Activated CD4-positive, alpha-beta T cell treated with anti-CD3 and anti-CD28 coated beads for 36 hours (primary cell): ENCODE measurements at regions of chr22 and their contacts with region 1.

Region 1: GRCh38 chr22:38755911-38756532 is at the start of gene SUN2:
- DNase-seq: peak; percentile 96
- ATAC-seq: peak; percentile 74
- H3K4me3 Mint-ChIP-seq: peak within 1 kb of the TSS; percentile 92
- H3K27ac Mint-ChIP-seq: peak within 1 kb of the TSS; percentile 94
- H3K4me1 Mint-ChIP-seq: peaks cover 58% of the 10 kb centered on the region
- H3K27me3 Mint-ChIP-seq: no peaks in the 10 kb centered on the region
- total RNA-seq, gene SUN2: 87.2 to 102 TPM

Region 2: DNA sequence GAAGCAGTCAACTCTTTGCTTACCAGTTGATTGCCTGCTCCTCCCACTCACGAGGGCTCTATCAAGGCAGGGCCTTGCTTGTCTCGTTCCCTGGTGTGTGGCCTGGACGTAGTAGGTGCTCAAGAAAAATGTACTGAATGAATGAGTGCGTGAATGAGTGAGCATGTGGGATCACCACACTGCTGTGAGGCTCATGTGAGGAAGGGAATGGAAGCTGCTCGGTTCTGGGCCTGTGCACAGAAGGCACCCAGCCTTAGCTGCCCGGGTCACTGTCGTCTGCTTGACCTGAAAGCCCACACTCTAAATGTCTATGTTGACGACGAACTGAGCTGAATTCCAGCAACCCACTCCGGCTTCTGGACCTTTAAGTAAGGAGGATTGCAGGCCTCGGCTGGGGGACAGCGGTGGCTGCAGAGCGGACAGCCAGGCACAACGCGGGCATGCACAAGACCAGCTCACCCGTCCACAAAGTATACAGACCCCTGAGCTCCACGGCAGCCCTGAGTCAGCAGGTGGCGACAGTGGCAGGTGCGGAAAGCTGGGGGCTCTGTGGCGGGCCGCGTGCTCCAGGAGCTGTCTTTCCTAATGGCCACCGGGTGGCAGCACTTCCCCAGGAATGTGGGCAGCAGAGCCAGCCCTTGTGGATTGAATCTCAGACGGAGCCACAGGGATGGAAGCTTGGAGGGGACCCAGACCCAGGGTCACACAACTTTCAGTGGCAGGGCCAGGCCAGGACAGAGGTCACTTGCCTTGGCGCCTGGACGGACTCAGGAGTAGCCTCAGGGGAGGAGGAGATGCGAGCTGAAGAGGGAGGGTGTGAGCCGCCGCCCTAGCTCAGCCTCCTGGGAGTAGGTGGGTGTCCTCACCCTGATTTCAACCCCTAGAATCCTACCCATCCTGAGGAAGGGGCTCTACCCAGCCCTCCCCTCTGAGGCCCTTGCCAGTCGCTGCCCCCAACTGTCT is 703.8 kb before region 1 on chr22:
- CTCF ChIA-PET with region 1: no interaction called
- POLR2A ChIA-PET with region 1: no interaction called
- intact Hi-C with region 1: loop called in 1 of 2 experiments (anchors 10 kb)
- DNase-seq: peak; percentile 87
- ATAC-seq: peak; percentile 83
- H3K4me3 Mint-ChIP-seq: no peak overlapping the region
- H3K27ac Mint-ChIP-seq: no peak overlapping the region
- H3K4me1 Mint-ChIP-seq: peaks cover 7% of the 10 kb centered on the region
- H3K27me3 Mint-ChIP-seq: peaks cover 7% of the 10 kb centered on the region

Region 3: GRCh38 chr22:38705235-38706100 is 50.6 kb before region 1 on chr22 and contains the start of gene GTPBP1:
- CTCF ChIA-PET with region 1: no interaction called
- POLR2A ChIA-PET with region 1: interaction called, 4 read pairs
- intact Hi-C with region 1: loop called (anchors 1 to 2 kb)
- DNase-seq: peak; percentile 98
- ATAC-seq: peak; percentile 89
- H3K4me3 Mint-ChIP-seq: peak within 1 kb of the TSS; percentile 93
- H3K27ac Mint-ChIP-seq: peak within 1 kb of the TSS; percentile 97
- H3K4me1 Mint-ChIP-seq: peaks cover 53% of the 10 kb centered on the region
- H3K27me3 Mint-ChIP-seq: no peaks in the 10 kb centered on the region
- total RNA-seq, gene GTPBP1: 88.6 to 92.8 TPM

Region 4: GRCh38 chr22:38740754-38741153 is 15.3 kb before region 1 on chr22:
- CTCF ChIA-PET with region 1: interaction called, 12 read pairs
- POLR2A ChIA-PET with region 1: interaction called, 4 read pairs
- intact Hi-C with region 1: no loop called
- DNase-seq: no peak
- ATAC-seq: no peak
- H3K4me3 Mint-ChIP-seq: no peak overlapping the region
- H3K27ac Mint-ChIP-seq: no peak overlapping the region
- H3K4me1 Mint-ChIP-seq: peaks cover 25% of the 10 kb centered on the region
- H3K27me3 Mint-ChIP-seq: no peaks in the 10 kb centered on the region

Region 5: GRCh38 chr22:38843201-38843715 is 87.2 kb after region 1 on chr22:
- CTCF ChIA-PET with region 1: interaction called, 6 read pairs
- POLR2A ChIA-PET with region 1: no interaction called
- intact Hi-C with region 1: loop called (anchors 1 to 2 kb)
- DNase-seq: peak; percentile 79
- ATAC-seq: peak; percentile 92
- H3K4me3 Mint-ChIP-seq: peak overlapping the region; percentile 68
- H3K27ac Mint-ChIP-seq: no peak overlapping the region
- H3K4me1 Mint-ChIP-seq: peaks cover 17% of the 10 kb centered on the region
- H3K27me3 Mint-ChIP-seq: peaks cover 18% of the 10 kb centered on the region

Region 6: DNA sequence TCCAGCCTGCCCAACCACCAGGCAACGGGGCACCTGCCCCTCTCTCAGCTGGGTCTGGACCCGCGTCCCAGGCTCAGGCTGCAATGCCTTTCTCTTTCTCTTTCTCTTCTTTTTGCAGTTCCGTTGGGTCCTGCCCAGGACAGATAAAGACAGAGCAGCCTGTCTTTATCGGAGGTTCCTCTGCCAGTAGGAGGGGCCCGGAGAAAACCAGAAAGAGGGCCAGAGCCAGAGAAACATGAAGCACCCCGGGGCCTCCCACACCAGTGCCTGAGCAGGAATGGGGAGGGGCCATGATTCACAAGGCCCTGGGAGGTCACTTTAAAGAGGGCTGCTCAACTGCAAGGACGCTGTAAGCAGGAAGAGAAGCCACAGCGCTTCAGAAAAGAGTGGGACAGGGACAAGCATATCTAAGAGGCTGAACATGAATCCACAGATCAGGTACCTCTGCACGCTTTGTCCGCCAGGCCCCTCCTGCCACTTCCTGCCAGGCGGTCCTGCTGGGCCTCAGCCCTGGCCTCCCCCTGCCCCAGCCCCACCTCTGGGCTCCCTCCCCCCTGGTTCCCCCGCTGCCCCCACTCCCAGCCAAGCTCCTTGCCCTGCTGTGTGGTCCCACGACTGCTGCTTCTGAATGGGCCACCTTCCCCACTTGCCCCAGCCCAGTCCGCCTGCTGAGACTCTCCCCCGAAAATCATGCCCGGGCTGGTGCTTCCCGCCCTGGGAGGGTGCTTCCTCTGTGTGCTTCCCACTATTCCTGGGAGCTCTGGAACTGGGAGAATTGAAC is 258.1 kb after region 1 on chr22 and contains the start of gene APOBEC3C:
- CTCF ChIA-PET with region 1: no interaction called
- POLR2A ChIA-PET with region 1: no interaction called
- intact Hi-C with region 1: loop called in 1 of 2 experiments (anchors 5 kb)
- DNase-seq: peak; percentile 89
- ATAC-seq: peak; percentile 96
- H3K4me3 Mint-ChIP-seq: peak within 1 kb of the TSS; percentile 93
- H3K27ac Mint-ChIP-seq: peak within 1 kb of the TSS; percentile 95
- H3K4me1 Mint-ChIP-seq: peaks cover 33% of the 10 kb centered on the region
- H3K27me3 Mint-ChIP-seq: no peaks in the 10 kb centered on the region
- total RNA-seq, gene APOBEC3C: 75.3 to 98.5 TPM

Region 7: DNA sequence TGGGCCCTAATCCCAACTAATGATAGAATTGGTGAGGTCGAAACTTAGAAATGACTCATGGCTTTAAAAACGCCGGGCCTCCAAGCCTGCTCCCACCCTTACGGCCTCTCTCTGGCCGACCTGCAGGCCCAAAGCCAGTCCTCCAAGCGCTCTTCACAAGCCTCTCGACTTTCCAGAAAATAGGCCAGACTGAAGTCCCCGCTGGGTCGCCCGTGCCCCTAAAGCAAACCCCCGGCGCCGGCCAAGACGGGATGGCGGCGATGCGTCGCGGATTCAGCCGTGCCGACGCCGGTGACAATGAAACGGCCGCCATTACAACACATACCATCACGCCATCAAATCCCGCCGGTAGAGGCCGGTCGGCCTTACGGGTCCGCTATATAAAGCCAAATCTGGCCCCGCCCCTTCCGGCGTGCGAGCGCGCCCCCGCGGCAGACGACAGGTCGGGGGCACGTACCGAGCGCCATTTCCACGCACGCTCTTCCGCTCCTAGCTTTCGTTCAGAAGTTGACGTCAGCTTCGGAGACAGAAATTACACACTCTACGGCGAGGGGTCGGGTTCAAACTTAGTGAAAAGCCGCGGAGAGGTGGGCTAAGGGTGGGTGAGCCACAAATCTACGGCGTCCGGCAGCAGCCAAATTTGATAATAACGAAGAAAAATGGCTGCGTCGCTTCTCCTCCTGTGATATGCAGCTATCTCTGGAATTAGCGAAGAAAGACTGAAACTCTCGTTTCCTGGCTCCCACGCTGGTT is 563.4 kb after region 1 on chr22 and contains the start of gene RPL3:
- CTCF ChIA-PET with region 1: no interaction called
- POLR2A ChIA-PET with region 1: no interaction called
- intact Hi-C with region 1: loop called in 1 of 2 experiments (anchors 2 kb)
- DNase-seq: peak; percentile 98
- ATAC-seq: peak; percentile 83
- H3K4me3 Mint-ChIP-seq: peak within 1 kb of the TSS; percentile 100
- H3K27ac Mint-ChIP-seq: peak within 1 kb of the TSS; percentile 100
- H3K4me1 Mint-ChIP-seq: peaks cover 32% of the 10 kb centered on the region
- H3K27me3 Mint-ChIP-seq: no peaks in the 10 kb centered on the region
- total RNA-seq, gene RPL3: 2,519 to 3,155 TPM